ENCODE measurements at regions of chr10 and their contacts with region 1.

Region 1: GRCh38 chr10:94320285-94320914 is 42.3 kb downstream of the NOC3L start:
- DNase-seq: peak; percentile 72
- H3K4me3 ChIP-seq: no peak overlapping the region
- H3K27ac ChIP-seq: no peak overlapping the region
- H3K4me1 ChIP-seq: peaks cover 10% of the 10 kb centered on the region
- H3K27me3 ChIP-seq: no peaks in the 10 kb centered on the region
- CTCF ChIP-seq: peak; percentile 92

Region 2: DNA sequence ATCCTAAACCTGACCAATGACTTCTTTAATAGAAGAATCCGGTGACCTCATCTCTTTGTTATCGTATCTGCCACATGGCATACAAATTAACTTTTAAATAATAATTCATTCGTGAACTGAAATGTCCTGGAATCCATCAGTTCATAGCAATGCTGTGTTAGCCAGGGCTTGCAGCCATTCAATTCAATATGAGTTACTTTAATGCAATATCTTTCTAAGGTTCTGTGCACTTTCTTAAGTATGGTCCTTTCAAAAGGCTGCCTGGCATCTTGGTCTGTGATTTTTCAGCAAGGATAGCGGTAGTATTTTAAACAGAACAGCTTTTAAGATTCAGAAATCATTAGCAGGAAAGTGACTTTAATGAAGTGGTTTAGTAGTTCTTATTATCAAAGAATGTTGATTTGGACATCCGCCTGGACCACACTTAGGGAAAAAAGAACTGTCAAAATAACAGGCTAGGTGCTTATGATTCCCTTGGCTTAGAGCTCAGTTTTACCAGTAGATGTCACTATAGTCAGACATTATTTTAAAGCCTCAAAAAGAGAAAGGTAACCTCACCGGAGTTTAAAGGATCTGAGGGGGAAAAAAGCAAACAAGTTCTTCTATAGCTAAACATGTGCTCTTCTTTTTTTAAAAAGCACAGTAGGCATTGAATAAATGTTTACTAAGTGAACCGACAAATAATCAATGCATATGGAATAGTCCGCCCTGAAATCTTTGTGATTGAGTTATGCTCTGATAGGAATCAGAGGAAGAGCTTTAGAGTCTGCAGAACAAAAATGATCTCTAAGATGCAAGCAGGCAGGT is 403.9 kb before region 1 on chr10:
- CTCF ChIA-PET with region 1: interaction called, 22 read pairs
- POLR2A ChIA-PET with region 1: no interaction called
- intact Hi-C with region 1: loop called (anchors 2 kb)
- DNase-seq: peak; percentile 30
- H3K4me3 ChIP-seq: no peak overlapping the region
- H3K27ac ChIP-seq: no peak overlapping the region
- H3K4me1 ChIP-seq: no peaks in the 10 kb centered on the region
- H3K27me3 ChIP-seq: no peaks in the 10 kb centered on the region
- CTCF ChIP-seq: peak; percentile 61

Region 3: GRCh38 chr10:94076321-94076841 is 244.0 kb before region 1 on chr10:
- CTCF ChIA-PET with region 1: interaction called, 10 read pairs
- POLR2A ChIA-PET with region 1: no interaction called
- intact Hi-C with region 1: loop called (anchors 10 kb)
- DNase-seq: no peak
- H3K4me3 ChIP-seq: no peak overlapping the region
- H3K27ac ChIP-seq: no peak overlapping the region
- H3K4me1 ChIP-seq: no peaks in the 10 kb centered on the region
- H3K27me3 ChIP-seq: peaks cover 7% of the 10 kb centered on the region
- CTCF ChIP-seq: no peak

Region 4: DNA sequence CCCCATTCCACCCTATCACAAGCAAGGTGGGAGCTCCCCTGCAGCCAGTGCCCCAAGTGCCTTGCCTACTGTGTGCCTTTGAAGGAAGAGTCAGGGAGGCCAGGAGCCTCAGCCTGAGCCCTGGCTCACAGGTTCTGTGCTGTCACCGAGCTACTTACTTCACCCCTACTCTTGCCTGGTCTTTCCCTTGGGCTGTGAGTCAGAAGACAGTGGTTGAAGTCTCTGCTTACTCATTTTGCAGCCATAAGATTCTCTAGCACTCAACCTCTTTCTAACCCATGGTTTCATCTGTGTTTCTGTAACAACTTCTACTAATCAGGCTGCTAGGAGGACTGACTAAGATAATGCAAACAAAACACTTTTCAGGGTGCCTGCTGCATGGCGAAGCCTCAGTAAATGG is 212.2 kb before region 1 on chr10:
- CTCF ChIA-PET with region 1: no interaction called
- POLR2A ChIA-PET with region 1: no interaction called
- intact Hi-C with region 1: no loop called
- DNase-seq: no peak
- H3K4me3 ChIP-seq: no peak overlapping the region
- H3K27ac ChIP-seq: no peak overlapping the region
- H3K4me1 ChIP-seq: no peaks in the 10 kb centered on the region
- H3K27me3 ChIP-seq: no peaks in the 10 kb centered on the region
- CTCF ChIP-seq: no peak

Region 5: DNA sequence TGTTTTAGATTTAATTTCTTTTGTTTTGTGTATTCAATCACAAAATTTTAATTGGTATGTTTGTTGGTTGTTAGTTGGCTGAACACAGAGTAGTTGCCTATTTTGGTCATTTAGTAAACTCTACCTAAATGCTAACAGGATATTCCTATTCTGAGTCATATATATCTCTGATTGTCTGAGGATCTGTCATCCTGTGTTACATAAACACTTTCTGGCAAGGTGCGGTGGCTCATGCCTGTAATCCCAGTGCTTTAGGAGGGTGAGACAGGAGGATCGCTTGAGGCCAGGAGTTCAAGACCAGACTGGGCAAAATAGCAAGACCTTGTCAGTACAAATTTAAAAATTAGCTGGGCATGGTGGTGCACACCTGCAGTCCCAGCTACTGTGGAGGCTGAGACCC is 148.1 kb before region 1 on chr10:
- CTCF ChIA-PET with region 1: no interaction called
- POLR2A ChIA-PET with region 1: no interaction called
- intact Hi-C with region 1: no loop called
- DNase-seq: no peak
- H3K4me3 ChIP-seq: no peak overlapping the region
- H3K27ac ChIP-seq: no peak overlapping the region
- H3K4me1 ChIP-seq: no peaks in the 10 kb centered on the region
- H3K27me3 ChIP-seq: no peaks in the 10 kb centered on the region
- CTCF ChIP-seq: no peak

Region 6: GRCh38 chr10:94205396-94205831 is 115.0 kb before region 1 on chr10:
- CTCF ChIA-PET with region 1: no interaction called
- POLR2A ChIA-PET with region 1: no interaction called
- intact Hi-C with region 1: no loop called
- DNase-seq: peak; percentile 43
- H3K4me3 ChIP-seq: no peak overlapping the region
- H3K27ac ChIP-seq: no peak overlapping the region
- H3K4me1 ChIP-seq: no peaks in the 10 kb centered on the region
- H3K27me3 ChIP-seq: no peaks in the 10 kb centered on the region
- CTCF ChIP-seq: no peak

Measured in A673 (cell line).